CD4-positive, alpha-beta T cell (primary cell): ENCODE measurements at regions of chr5 and their contacts with region 1.

Region 1: GRCh38 chr5:141960449-141961202 is 2.6 kb upstream of the PCDH12 start:
- DNase-seq: peak; percentile 84 to 96 (median 91)
- ATAC-seq: peak; percentile 98
- H3K4me3 ChIP-seq: no peak overlapping the region
- H3K4me3 Mint-ChIP-seq: peak overlapping the region; percentile 40
- H3K27ac ChIP-seq: peak overlapping the region in 1 of 2 donors; percentile 4
- H3K27ac Mint-ChIP-seq: peak overlapping the region; percentile 86
- H3K4me1 ChIP-seq: peaks cover 48% of the 10 kb centered on the region
- H3K4me1 Mint-ChIP-seq: peaks cover 51% of the 10 kb centered on the region
- H3K27me3 ChIP-seq: no peaks in the 10 kb centered on the region
- H3K27me3 Mint-ChIP-seq: no peaks in the 10 kb centered on the region
- CTCF ChIP-seq: peak; percentile 75

Region 2: GRCh38 chr5:140000332-140000731 is 1960.3 kb before region 1 on chr5:
- CTCF ChIA-PET with region 1: no interaction called
- POLR2A ChIA-PET with region 1: no interaction called
- intact Hi-C with region 1: no loop called
- DNase-seq: no peak
- ATAC-seq: no peak
- H3K4me3 ChIP-seq: no peak overlapping the region
- H3K4me3 Mint-ChIP-seq: no peak overlapping the region
- H3K27ac ChIP-seq: no peak overlapping the region
- H3K27ac Mint-ChIP-seq: no peak overlapping the region
- H3K4me1 ChIP-seq: no peaks in the 10 kb centered on the region
- H3K4me1 Mint-ChIP-seq: no peaks in the 10 kb centered on the region
- H3K27me3 ChIP-seq: peaks cover 27 to 38% of the 10 kb centered on the region in 2 experiments
- H3K27me3 Mint-ChIP-seq: peaks cover 66% of the 10 kb centered on the region
- CTCF ChIP-seq: no peak

Region 3: DNA sequence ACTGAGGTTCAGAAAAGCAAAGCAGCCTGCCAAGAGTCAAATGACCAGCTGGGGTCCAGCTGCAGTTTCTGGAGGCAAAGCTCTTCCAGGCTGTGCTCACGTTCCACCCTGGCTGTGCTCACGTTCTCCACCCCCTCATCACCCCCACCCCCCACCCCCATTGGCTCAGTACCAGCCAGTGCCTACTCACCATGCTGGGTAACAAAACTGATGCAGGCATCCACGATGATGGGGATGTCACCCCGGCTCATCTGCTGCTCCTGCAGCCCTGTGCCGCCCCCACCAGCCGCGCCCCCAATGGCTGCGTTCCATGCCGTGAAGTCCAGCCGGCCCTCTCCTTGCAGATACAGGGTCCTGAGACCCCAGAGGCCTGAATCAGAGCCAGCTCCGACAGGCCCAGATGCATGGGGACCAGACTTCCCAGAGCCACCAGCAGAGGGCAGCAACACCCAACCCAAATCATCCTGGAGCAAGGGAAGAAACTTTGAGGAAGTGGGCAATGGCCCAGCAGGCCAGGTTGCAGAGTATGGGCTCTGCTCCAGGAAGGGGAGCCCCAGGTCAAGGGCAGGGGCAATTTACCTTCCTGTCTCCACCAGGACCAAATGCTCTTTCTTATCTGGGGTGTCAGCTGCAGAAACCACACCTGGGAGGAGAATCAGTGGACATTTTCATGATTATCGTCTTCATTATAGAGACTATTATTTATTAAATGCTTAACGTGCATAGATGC is 295.7 kb before region 1 on chr5:
- CTCF ChIA-PET with region 1: interaction called, 18 read pairs
- POLR2A ChIA-PET with region 1: no interaction called
- intact Hi-C with region 1: loop called (anchors 1 to 2 kb)
- DNase-seq: peak; percentile 36 to 87 (median 70)
- ATAC-seq: peak; percentile 74
- H3K4me3 ChIP-seq: no peak overlapping the region
- H3K4me3 Mint-ChIP-seq: no peak overlapping the region
- H3K27ac ChIP-seq: no peak overlapping the region
- H3K27ac Mint-ChIP-seq: no peak overlapping the region
- H3K4me1 ChIP-seq: peaks cover 4% of the 10 kb centered on the region
- H3K4me1 Mint-ChIP-seq: no peaks in the 10 kb centered on the region
- H3K27me3 ChIP-seq: no peaks in the 10 kb centered on the region
- H3K27me3 Mint-ChIP-seq: no peaks in the 10 kb centered on the region
- CTCF ChIP-seq: peak; percentile 96

Region 4: GRCh38 chr5:141691867-141692532 is 268.6 kb before region 1 on chr5:
- CTCF ChIA-PET with region 1: interaction called, 78 read pairs
- POLR2A ChIA-PET with region 1: interaction called, 44 read pairs
- intact Hi-C with region 1: loop called (anchors 2 kb)
- DNase-seq: peak; percentile 66 to 92 (median 84)
- ATAC-seq: peak; percentile 68
- H3K4me3 ChIP-seq: peak overlapping the region; percentile 35
- H3K4me3 Mint-ChIP-seq: peak overlapping the region; percentile 57
- H3K27ac ChIP-seq: no peak overlapping the region
- H3K27ac Mint-ChIP-seq: no peak overlapping the region
- H3K4me1 ChIP-seq: peaks cover 20% of the 10 kb centered on the region
- H3K4me1 Mint-ChIP-seq: peaks cover 23% of the 10 kb centered on the region
- H3K27me3 ChIP-seq: no peaks in the 10 kb centered on the region
- H3K27me3 Mint-ChIP-seq: peaks cover 35% of the 10 kb centered on the region
- CTCF ChIP-seq: peak; percentile 98

Region 5: GRCh38 chr5:141849375-141850243 is 111.0 kb before region 1 on chr5:
- CTCF ChIA-PET with region 1: interaction called, 4 read pairs
- POLR2A ChIA-PET with region 1: interaction called, 11 read pairs
- intact Hi-C with region 1: no loop called
- DNase-seq: peak; percentile 51 to 86 (median 69)
- ATAC-seq: peak; percentile 77
- H3K4me3 ChIP-seq: peak overlapping the region; percentile 81
- H3K4me3 Mint-ChIP-seq: peak overlapping the region; percentile 90
- H3K27ac ChIP-seq: peak overlapping the region; percentile 64 to 71
- H3K27ac Mint-ChIP-seq: peak overlapping the region; percentile 80
- H3K4me1 ChIP-seq: peaks cover 14% of the 10 kb centered on the region
- H3K4me1 Mint-ChIP-seq: peaks cover 10% of the 10 kb centered on the region
- H3K27me3 ChIP-seq: no peaks in the 10 kb centered on the region
- H3K27me3 Mint-ChIP-seq: no peaks in the 10 kb centered on the region
- CTCF ChIP-seq: no peak

Region 6: GRCh38 chr5:141889282-141889871 is 71.2 kb before region 1 on chr5:
- CTCF ChIA-PET with region 1: no interaction called
- POLR2A ChIA-PET with region 1: interaction called, 6 read pairs
- intact Hi-C with region 1: loop called in 1 of 2 experiments (anchors 1 kb)
- DNase-seq: no peak
- ATAC-seq: no peak
- H3K4me3 ChIP-seq: no peak overlapping the region
- H3K4me3 Mint-ChIP-seq: no peak overlapping the region
- H3K27ac ChIP-seq: no peak overlapping the region
- H3K27ac Mint-ChIP-seq: no peak overlapping the region
- H3K4me1 ChIP-seq: no peaks in the 10 kb centered on the region
- H3K4me1 Mint-ChIP-seq: no peaks in the 10 kb centered on the region
- H3K27me3 ChIP-seq: peaks cover 8 to 10% of the 10 kb centered on the region in 2 experiments
- H3K27me3 Mint-ChIP-seq: peaks cover 45% of the 10 kb centered on the region
- CTCF ChIP-seq: peak; percentile 8

Region 7: DNA sequence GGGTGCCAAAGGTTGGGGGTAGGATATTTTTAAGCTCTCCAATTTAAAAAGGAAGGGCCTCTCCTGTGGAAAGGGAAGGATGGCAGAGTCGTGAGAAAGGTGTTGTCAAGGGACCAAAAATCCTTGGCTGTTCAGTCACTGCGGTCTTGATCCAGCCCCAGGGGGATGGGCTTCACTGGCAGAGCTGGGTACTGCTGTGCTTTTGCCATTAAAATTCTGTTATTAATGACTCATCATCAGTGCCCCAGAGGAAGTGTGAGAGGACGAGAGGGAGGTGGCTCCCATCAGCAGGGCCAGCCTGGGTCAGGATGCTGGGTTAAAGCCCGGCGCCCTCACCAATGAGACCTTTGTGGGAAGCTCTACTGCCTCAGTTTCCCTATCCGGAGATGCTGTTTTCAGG is 19.3 kb before region 1 on chr5:
- CTCF ChIA-PET with region 1: interaction called, 15 read pairs
- POLR2A ChIA-PET with region 1: interaction called, 8 read pairs
- intact Hi-C with region 1: no loop called
- DNase-seq: no peak
- ATAC-seq: no peak
- H3K4me3 ChIP-seq: no peak overlapping the region
- H3K4me3 Mint-ChIP-seq: no peak overlapping the region
- H3K27ac ChIP-seq: no peak overlapping the region
- H3K27ac Mint-ChIP-seq: peak overlapping the region; percentile 23
- H3K4me1 ChIP-seq: no peaks in the 10 kb centered on the region
- H3K4me1 Mint-ChIP-seq: no peaks in the 10 kb centered on the region
- H3K27me3 ChIP-seq: no peaks in the 10 kb centered on the region
- H3K27me3 Mint-ChIP-seq: no peaks in the 10 kb centered on the region
- CTCF ChIP-seq: no peak

Region 8: DNA sequence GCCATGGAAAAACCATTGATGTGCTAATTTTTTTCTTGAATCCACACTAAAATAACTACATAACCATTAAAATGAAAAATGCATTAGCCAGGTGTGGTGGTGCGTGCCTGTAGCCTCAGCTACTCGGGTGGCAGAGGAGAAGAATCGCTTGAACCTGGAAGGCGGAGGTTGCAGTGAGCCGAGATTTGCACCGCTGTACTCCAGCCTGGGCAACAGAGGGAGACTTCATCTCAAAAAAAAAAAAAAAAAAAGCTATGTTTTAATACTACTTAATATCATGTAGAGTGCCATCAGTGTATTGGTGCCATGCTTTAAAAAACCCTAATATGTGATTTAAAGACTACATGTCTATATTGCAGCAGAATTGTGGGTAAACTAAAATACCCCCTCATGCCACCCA is 206.8 kb after region 1 on chr5:
- CTCF ChIA-PET with region 1: no interaction called
- POLR2A ChIA-PET with region 1: no interaction called
- intact Hi-C with region 1: no loop called
- DNase-seq: no peak
- ATAC-seq: no peak
- H3K4me3 ChIP-seq: no peak overlapping the region
- H3K4me3 Mint-ChIP-seq: no peak overlapping the region
- H3K27ac ChIP-seq: no peak overlapping the region
- H3K27ac Mint-ChIP-seq: no peak overlapping the region
- H3K4me1 ChIP-seq: no peaks in the 10 kb centered on the region
- H3K4me1 Mint-ChIP-seq: no peaks in the 10 kb centered on the region
- H3K27me3 ChIP-seq: no peaks in the 10 kb centered on the region
- H3K27me3 Mint-ChIP-seq: no peaks in the 10 kb centered on the region
- CTCF ChIP-seq: no peak